Calu3 (cell line): ENCODE measurements at regions of chr16 and their contacts with region 1.

Region 1: DNA sequence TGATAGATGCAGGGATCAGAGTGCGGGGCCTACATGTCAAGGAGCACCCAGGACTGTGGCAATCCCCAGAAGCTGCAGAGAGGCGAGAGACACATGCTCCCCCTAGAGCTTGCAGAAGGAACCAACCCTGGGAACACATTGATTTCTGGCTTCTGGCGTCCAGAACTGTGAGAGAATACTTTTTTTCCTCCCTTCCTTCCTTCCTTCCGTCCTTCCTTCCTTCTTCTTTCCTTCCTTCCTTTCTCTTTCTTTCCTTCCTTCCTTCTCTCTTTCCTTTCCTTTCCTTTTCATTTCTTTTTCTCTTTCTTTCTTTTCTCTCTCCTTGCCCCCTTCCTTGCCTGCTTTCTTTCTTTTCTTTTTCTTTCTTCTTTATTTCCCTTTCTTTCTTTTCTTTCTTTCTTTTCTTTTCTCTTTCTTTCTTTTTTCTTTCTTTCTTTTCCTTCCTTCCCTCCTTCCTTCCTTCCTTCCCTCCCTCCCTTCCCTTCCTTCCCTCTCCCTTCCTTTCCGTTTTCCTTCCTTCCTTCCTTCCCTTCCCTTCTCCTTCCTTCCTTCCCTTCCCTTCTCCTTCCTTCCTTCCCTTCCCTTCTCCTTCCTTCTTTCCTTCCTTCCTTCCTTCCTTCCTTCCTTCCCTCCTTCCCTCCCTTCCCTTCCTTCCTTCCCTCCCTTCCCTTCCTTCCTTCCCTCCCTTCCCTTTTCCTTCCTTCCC is 134.3 kb downstream of the HAPSTR1 start:
- DNase-seq: peak; percentile 25
- H3K4me3 Mint-ChIP-seq: no peak overlapping the region
- H3K27ac Mint-ChIP-seq: no peak overlapping the region
- H3K4me1 Mint-ChIP-seq: no peaks in the 10 kb centered on the region
- H3K27me3 Mint-ChIP-seq: peaks cover 82% of the 10 kb centered on the region
- CTCF ChIP-seq: peak; percentile 63

Region 2: DNA sequence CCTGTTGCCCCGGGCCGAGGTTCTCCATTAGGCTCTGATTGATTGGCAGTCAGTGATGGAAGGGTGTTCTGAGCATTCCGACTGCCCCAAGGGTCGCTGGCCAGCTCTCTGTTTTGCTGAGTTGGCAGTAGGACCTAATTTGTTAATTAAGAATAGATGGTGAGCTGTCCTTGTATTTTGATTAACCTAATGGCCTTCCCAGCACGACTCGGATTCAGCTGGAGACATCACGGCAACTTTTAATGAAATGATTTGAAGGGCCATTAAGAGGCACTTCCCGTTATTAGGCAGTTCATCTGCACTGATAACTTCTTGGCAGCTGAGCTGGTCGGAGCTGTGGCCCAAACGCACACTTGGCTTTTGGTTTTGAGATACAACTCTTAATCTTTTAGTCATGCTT is 60.1 kb before region 1 on chr16:
- CTCF ChIA-PET with region 1: interaction called, 3 read pairs
- intact Hi-C with region 1: loop called (anchors 2 kb)
- DNase-seq: no peak
- H3K4me3 Mint-ChIP-seq: no peak overlapping the region
- H3K27ac Mint-ChIP-seq: no peak overlapping the region
- H3K4me1 Mint-ChIP-seq: no peaks in the 10 kb centered on the region
- H3K27me3 Mint-ChIP-seq: no peaks in the 10 kb centered on the region
- CTCF ChIP-seq: no peak

Region 3: DNA sequence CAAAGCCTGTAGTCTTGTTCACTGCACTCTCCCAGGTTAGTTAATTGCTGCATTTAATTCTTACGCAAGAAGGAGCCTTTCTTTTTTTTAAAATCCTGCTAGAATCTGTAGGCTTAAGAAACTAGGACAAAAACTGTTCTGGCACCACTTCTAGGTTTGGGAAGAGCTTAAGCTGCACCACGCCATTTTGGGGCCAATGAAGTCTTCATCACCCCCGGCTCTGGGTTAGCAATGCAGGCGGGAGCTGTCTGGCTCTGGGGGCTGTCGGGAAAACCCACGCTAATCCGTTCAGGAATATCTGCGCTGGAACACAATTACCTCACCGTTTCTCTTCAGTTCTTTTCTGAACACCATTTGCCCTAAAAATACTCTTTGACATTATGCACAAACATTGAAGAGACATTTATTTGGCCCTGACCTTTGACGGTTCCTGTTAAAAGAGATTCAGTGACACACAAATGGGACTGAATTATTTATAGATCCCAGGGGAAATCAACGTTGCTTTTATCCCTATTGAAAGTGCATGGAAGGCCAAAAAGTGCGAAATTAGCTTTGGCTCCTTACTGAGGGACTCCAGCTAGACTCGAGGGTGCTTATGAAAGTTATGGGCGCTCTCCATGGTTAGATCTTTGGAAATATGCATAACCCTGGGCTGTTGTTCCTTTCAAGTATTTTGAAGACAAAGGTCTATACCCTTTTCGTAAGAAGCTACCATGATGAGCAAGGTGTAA is 114.9 kb after region 1 on chr16:
- CTCF ChIA-PET with region 1: no interaction called
- intact Hi-C with region 1: no loop called
- DNase-seq: no peak
- H3K4me3 Mint-ChIP-seq: no peak overlapping the region
- H3K27ac Mint-ChIP-seq: no peak overlapping the region
- H3K4me1 Mint-ChIP-seq: no peaks in the 10 kb centered on the region
- H3K27me3 Mint-ChIP-seq: peaks cover 11% of the 10 kb centered on the region
- CTCF ChIP-seq: no peak